ENCODE measurements at regions of chr17 and their contacts with region 1.

Region 1: DNA sequence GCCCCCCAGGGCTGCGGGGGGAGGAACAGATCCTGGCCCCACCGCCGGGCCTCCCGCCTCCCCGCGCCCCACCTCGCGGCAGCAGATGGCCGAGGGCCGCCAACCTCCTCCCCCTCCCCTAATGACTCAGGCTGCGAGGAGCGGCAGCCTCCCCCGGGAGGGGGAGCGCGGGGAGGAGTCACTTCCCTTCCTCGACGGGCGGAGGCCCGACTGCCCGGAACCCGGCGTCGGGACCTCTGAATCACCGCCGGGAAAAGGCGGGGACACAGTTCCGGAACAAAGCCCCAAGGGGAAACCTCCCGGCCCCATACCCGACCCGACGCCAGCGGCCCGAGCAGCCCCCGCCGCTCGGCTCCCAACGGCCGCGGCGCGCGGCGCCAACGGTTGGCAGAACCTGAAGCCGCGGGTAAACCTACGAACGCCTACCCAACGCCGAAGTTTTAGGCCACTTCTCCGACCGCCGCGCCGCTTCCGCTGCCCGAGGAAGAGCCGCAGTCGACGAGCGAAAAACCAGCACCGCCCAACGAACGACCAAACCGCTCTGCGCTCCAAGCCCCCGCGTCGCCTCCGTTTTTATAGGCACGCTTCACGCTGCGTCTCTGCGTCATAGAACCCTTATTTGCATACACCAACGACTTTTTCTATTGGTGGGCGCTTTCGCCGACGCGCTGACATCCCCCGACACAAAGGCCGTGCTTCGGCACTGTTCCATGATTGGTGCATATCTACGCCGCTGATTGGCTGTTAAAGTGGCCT is 5.2 kb upstream of the UNK start:
- DNase-seq: peak; percentile 94 to 98
- H3K4me3 ChIP-seq: peak overlapping the region; percentile 75 to 93 (median 86)
- H3K27ac ChIP-seq: peak overlapping the region; percentile 92
- H3K4me1 ChIP-seq: peaks cover 0 to 10% (median 7%) of the 10 kb centered on the region in 4 experiments; a peak in 6 of 7 replicates
- H3K27me3 ChIP-seq: no peaks in the 10 kb centered on the region
- CTCF ChIP-seq: no peak
- EP300 ChIP-seq: no peak
- POLR2A ChIP-seq: peak; percentile 100
- RAD21 ChIP-seq: no peak

Region 2: GRCh38 chr17:75625813-75626486 is 153.5 kb before region 1 on chr17:
- CTCF ChIA-PET with region 1: interaction called, 3 read pairs
- POLR2A ChIA-PET with region 1: interaction called, 10 read pairs
- DNase-seq: peak in 1 of 2 experiments; percentile 88
- H3K4me3 ChIP-seq: no peak overlapping the region
- H3K27ac ChIP-seq: no peak overlapping the region
- H3K4me1 ChIP-seq: no peaks in the 10 kb centered on the region
- H3K27me3 ChIP-seq: no peaks in the 10 kb centered on the region; a peak in 2 of 7 replicates
- CTCF ChIP-seq: peak; percentile 91 to 94 (median 93)
- EP300 ChIP-seq: no peak
- POLR2A ChIP-seq: 0 out of 3 replicates have a peak, but pooled peaks of 1 of the 2 experiments have one; percentile 33
- RAD21 ChIP-seq: peak; percentile 22 to 50; a peak in 3 of 4 replicates

Region 3: GRCh38 chr17:75701171-75701687 is 78.2 kb before region 1 on chr17:
- CTCF ChIA-PET with region 1: no interaction called
- POLR2A ChIA-PET with region 1: no interaction called
- DNase-seq: no peak
- H3K4me3 ChIP-seq: no peak overlapping the region
- H3K27ac ChIP-seq: no peak overlapping the region
- H3K4me1 ChIP-seq: no peaks in the 10 kb centered on the region
- H3K27me3 ChIP-seq: no peaks in the 10 kb centered on the region
- CTCF ChIP-seq: no peak
- EP300 ChIP-seq: no peak
- POLR2A ChIP-seq: no peak
- RAD21 ChIP-seq: no peak

Region 4: GRCh38 chr17:75764711-75765421 is 14.5 kb before region 1 on chr17 and contains the start of gene GALK1:
- CTCF ChIA-PET with region 1: interaction called, 359 read pairs
- POLR2A ChIA-PET with region 1: interaction called, 425 read pairs
- DNase-seq: peak in 1 of 2 experiments; percentile 82
- H3K4me3 ChIP-seq: peak within 1 kb of the TSS; percentile 50 to 88 (median 62)
- H3K27ac ChIP-seq: no peak within 1 kb of the TSS
- H3K4me1 ChIP-seq: peaks cover 0 to 8% (median 6%) of the 10 kb centered on the region in 4 experiments; a peak in 5 of 7 replicates
- H3K27me3 ChIP-seq: peaks cover 0 to 2% (median 0%) of the 10 kb centered on the region in 4 experiments; a peak in 1 of 7 replicates
- CTCF ChIP-seq: peak; percentile 67 to 74 (median 67)
- EP300 ChIP-seq: no peak
- POLR2A ChIP-seq: no peak
- RAD21 ChIP-seq: peak; percentile 31 to 45
- total RNA-seq, gene GALK1: 31.0 and 34.1 TPM in 2 replicates

Region 5: DNA sequence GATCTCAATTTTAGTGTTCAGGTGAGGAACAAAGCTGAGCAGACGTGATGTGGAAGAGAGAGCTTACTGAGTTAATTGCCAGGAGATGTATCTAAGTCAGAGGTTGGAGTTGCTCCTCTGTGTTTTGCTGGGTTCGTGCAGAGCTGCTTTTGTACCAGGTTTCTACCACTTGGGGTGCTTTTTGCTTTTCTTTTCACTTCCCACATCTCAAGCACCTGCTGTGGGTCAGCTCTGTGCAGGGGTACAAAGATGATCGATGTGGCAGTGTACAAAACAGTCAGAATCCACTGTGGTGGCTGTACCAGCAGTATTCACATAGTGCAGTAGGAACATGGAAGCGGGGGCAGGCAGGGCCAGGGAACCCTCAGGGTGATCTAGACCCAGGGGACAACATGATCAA is 20.0 kb after region 1 on chr17:
- CTCF ChIA-PET with region 1: interaction called, 4 read pairs
- POLR2A ChIA-PET with region 1: interaction called, 52 read pairs
- DNase-seq: no peak
- H3K4me3 ChIP-seq: no peak overlapping the region
- H3K27ac ChIP-seq: no peak overlapping the region
- H3K4me1 ChIP-seq: no peaks in the 10 kb centered on the region
- H3K27me3 ChIP-seq: no peaks in the 10 kb centered on the region
- CTCF ChIP-seq: no peak
- EP300 ChIP-seq: no peak
- POLR2A ChIP-seq: no peak
- RAD21 ChIP-seq: no peak

Region 6: DNA sequence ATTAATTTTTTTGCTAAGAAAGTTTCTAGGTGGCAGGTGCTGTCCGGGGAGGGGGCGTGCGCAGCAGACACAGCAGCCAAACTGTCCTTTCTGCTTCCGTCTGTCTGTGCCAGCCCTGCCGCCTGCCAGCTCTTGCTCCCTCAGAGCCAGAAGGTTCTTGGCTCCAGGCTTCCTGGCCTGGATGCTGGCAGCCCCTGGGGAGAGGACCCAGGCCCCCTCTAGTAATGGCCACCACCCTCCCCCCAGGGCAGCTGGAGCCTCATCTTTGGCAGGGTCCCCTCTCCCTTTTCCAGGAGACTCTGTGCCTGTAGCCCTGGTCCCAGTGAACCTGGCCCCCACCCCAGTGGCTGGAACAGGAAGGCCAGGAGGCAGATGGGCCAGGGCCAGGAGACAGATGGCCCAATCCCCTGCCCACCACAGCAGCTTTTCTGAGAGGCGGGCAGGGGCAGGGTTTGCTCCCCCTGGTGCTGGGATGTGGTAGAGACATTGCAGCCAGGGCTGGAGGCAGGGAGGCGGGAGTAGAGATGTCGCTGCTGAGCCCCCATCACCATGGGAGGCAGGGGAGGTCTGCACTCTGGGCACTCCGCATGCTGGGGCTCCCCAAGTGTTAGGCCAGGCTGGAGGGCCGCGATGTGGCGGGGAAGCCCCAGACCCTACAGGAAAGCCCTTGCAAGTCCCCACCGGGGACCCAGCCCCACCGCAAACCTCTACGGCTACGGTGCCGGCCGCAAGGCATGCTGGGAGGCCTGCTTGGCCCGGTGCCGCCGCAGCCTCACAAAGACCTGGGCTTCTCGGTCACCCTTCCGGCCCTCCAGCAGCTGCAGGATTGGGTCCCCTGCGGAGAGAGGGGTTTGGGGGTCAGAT is 48.1 kb after region 1 on chr17:
- CTCF ChIA-PET with region 1: interaction called, 30 read pairs
- POLR2A ChIA-PET with region 1: interaction called, 216 read pairs
- DNase-seq: peak; percentile 44 to 96
- H3K4me3 ChIP-seq: peak overlapping the region in 3 of 4 experiments; percentile 27 to 53 (median 45); a peak in 6 of 8 replicates
- H3K27ac ChIP-seq: peak overlapping the region; percentile 43; the same call in 1 of the 2 replicates
- H3K4me1 ChIP-seq: peaks cover 0 to 28% (median 23%) of the 10 kb centered on the region in 4 experiments; a peak in 6 of 7 replicates
- H3K27me3 ChIP-seq: no peaks in the 10 kb centered on the region
- CTCF ChIP-seq: peak; percentile 92 to 97 (median 95)
- EP300 ChIP-seq: 0 out of 3 replicates have a peak, but pooled peaks of 1 of the 2 experiments have one; percentile 13
- POLR2A ChIP-seq: peak in 1 of 2 experiments; percentile 60; a peak in 2 of 3 replicates
- RAD21 ChIP-seq: peak; percentile 27 to 52; a peak in 3 of 4 replicates

Region 7: GRCh38 chr17:75855310-75856081 is 76.1 kb after region 1 on chr17 and contains the start of gene WBP2:
- CTCF ChIA-PET with region 1: interaction called, 5 read pairs
- POLR2A ChIA-PET with region 1: interaction called, 18 read pairs
- DNase-seq: peak; percentile 95 to 100
- H3K4me3 ChIP-seq: peak within 1 kb of the TSS; percentile 81 to 95 (median 91)
- H3K27ac ChIP-seq: peak within 1 kb of the TSS; percentile 93
- H3K4me1 ChIP-seq: peaks cover 0 to 7% (median 2%) of the 10 kb centered on the region in 4 experiments; a peak in 4 of 7 replicates
- H3K27me3 ChIP-seq: no peaks in the 10 kb centered on the region
- CTCF ChIP-seq: peak; percentile 47 to 61 (median 48)
- EP300 ChIP-seq: peak in 1 of 2 experiments; percentile 4; a peak in 1 of 3 replicates
- POLR2A ChIP-seq: peak; percentile 79 to 93
- RAD21 ChIP-seq: peak in 1 of 2 experiments; percentile 38; a peak in 1 of 4 replicates
- total RNA-seq, gene WBP2: 61.8 and 71.2 TPM in 2 replicates

Region 8: GRCh38 chr17:75877752-75878173 is 98.4 kb after region 1 on chr17:
- CTCF ChIA-PET with region 1: no interaction called
- POLR2A ChIA-PET with region 1: interaction called, 11 read pairs
- DNase-seq: peak in 1 of 2 experiments; percentile 87
- H3K4me3 ChIP-seq: peak overlapping the region; percentile 40 to 72 (median 66)
- H3K27ac ChIP-seq: no peak overlapping the region
- H3K4me1 ChIP-seq: peaks cover 0 to 22% (median 12%) of the 10 kb centered on the region in 4 experiments; a peak in 6 of 7 replicates
- H3K27me3 ChIP-seq: peaks cover 10 to 31% (median 24%) of the 10 kb centered on the region in 4 experiments
- CTCF ChIP-seq: peak; percentile 53 to 69 (median 57)
- EP300 ChIP-seq: no peak
- POLR2A ChIP-seq: no peak
- RAD21 ChIP-seq: peak; percentile 10 to 44; a peak in 1 of 4 replicates

Region 9: GRCh38 chr17:75917141-75917916 is 137.9 kb after region 1 on chr17:
- CTCF ChIA-PET with region 1: no interaction called
- POLR2A ChIA-PET with region 1: no interaction called
- DNase-seq: no peak
- H3K4me3 ChIP-seq: no peak overlapping the region
- H3K27ac ChIP-seq: no peak overlapping the region
- H3K4me1 ChIP-seq: no peaks in the 10 kb centered on the region
- H3K27me3 ChIP-seq: no peaks in the 10 kb centered on the region
- CTCF ChIP-seq: no peak
- EP300 ChIP-seq: no peak
- POLR2A ChIP-seq: no peak
- RAD21 ChIP-seq: no peak

Region 10: GRCh38 chr17:76088036-76088867 is 308.8 kb after region 1 on chr17:
- CTCF ChIA-PET with region 1: no interaction called
- POLR2A ChIA-PET with region 1: no interaction called
- DNase-seq: peak in 1 of 2 experiments; percentile 72
- H3K4me3 ChIP-seq: no peak overlapping the region
- H3K27ac ChIP-seq: no peak overlapping the region
- H3K4me1 ChIP-seq: no peaks in the 10 kb centered on the region
- H3K27me3 ChIP-seq: no peaks in the 10 kb centered on the region
- CTCF ChIP-seq: peak; percentile 60 to 74 (median 63)
- EP300 ChIP-seq: no peak
- POLR2A ChIP-seq: no peak
- RAD21 ChIP-seq: peak; percentile 40 to 56

Measured in H1 (cell line).